RWPE1 (cell line): ENCODE measurements at regions of chr1 and their contacts with region 1.

Region 1: GRCh38 chr1:58566339-58566738 is 10.7 kb downstream of the TACSTD2 start:
- DNase-seq: no peak
- H3K27ac ChIP-seq: no peak overlapping the region
- CTCF ChIP-seq: no peak

Region 2: DNA sequence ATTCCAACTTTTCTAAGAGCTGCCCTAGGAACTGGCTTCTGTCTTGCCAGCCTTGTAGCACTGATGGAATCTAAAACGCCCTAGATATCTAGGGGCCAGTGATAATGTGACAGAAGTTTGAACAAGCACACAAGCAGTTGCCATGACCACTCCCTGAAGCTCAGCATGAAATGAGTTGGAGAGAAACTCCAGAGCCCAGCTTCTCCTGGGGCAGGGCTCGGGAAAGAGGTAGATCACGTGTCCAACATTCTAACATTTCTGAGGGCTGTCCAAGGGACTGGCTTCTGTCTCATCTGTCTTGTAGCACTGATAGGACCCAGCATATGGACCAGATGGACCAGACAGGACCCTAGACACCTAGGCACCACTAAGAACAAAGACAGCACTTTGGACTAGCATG is 57.7 kb before region 1 on chr1:
- CTCF ChIA-PET with region 1: no interaction called
- POLR2A ChIA-PET with region 1: no interaction called
- DNase-seq: no peak
- H3K27ac ChIP-seq: no peak overlapping the region
- CTCF ChIP-seq: no peak

Region 3: GRCh38 chr1:58576727-58577653 is 10.7 kb after region 1 on chr1 and contains the start of gene TACSTD2:
- CTCF ChIA-PET with region 1: no interaction called
- POLR2A ChIA-PET with region 1: interaction called, 19 read pairs
- DNase-seq: peak; percentile 86
- H3K27ac ChIP-seq: peak within 1 kb of the TSS; percentile 93
- CTCF ChIP-seq: 0 out of 2 replicates have a peak, but pooled peaks have one; percentile 22